ENCODE measurements at regions of chr16 and their contacts with region 1.

Region 1: GRCh38 chr16:69796351-69797118 is 34.4 kb downstream of the WWP2 start:
- DNase-seq: peak; percentile 21 to 43 (median 39)
- H3K4me3 ChIP-seq: no peak overlapping the region
- H3K4me3 Mint-ChIP-seq: no peak overlapping the region
- H3K27ac ChIP-seq: no peak overlapping the region
- H3K27ac Mint-ChIP-seq: no peak overlapping the region
- H3K4me1 ChIP-seq: no peaks in the 10 kb centered on the region
- H3K4me1 Mint-ChIP-seq: peaks cover 7 to 16% (median 8%) of the 10 kb centered on the region in 4 donors
- H3K27me3 ChIP-seq: no peaks in the 10 kb centered on the region
- H3K27me3 Mint-ChIP-seq: no peaks in the 10 kb centered on the region

Region 2: GRCh38 chr16:69709456-69710084 is 87.0 kb before region 1 on chr16:
- CTCF ChIA-PET with region 1: interaction called, 4 read pairs
- POLR2A ChIA-PET with region 1: no interaction called
- intact Hi-C with region 1: loop called (anchors 1 kb)
- DNase-seq: peak in 4 of 5 donors; percentile 49 to 60 (median 58)
- H3K4me3 ChIP-seq: no peak overlapping the region
- H3K4me3 Mint-ChIP-seq: no peak overlapping the region
- H3K27ac ChIP-seq: no peak overlapping the region
- H3K27ac Mint-ChIP-seq: peak overlapping the region in 6 of 7 donors; percentile 0 to 70 (median 38)
- H3K4me1 ChIP-seq: peaks cover 6% of the 10 kb centered on the region
- H3K4me1 Mint-ChIP-seq: peaks cover 0 to 4% (median 2%) of the 10 kb centered on the region in 4 donors
- H3K27me3 ChIP-seq: no peaks in the 10 kb centered on the region
- H3K27me3 Mint-ChIP-seq: no peaks in the 10 kb centered on the region

Region 3: DNA sequence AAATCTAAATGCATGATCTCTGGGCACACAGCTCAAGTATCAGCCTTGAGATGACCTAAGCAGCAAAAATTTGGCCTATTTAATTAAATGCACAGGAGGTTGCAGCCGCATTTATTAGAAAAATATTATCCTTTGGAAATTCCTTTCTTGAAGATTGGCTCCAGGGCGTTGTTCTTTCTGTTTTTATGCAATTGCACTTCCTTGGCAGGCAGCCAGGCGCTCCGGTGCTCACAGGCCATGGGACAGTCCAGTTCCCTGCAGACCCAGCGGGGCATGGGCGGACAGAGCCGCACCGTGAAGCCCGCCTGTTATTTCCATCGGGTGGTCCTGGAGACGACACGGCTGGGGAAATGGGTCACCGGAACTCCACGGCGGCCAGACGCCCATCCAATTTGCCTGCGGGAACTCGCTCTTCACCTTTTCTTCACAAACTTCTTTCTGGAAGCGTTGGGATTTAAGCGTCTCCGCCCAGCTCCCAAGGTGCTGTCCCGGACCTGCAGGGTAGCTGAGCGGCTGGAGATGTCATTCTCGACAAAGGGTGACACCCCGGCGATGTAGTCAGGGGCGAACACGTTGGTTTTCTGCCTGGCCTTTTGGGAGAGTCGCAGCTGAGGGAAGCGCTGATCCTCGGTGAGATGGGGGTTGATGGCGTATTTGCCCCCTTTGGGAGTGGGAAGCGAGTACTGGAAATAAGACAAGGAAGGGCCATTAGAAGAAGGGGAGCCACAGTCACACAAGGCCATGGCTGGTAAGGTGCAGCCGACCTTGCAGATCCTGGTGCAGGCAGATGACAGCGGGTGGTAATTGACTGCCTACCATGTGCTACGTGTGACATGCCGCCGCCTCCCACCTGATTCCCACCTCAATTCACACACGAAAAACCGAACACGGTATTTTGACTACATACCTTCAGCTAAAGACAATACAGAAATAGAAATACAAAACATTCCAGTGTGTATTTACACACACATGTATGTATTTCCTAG is 54.3 kb before region 1 on chr16:
- CTCF ChIA-PET with region 1: no interaction called
- POLR2A ChIA-PET with region 1: no interaction called
- intact Hi-C with region 1: no loop called
- DNase-seq: no peak
- H3K4me3 ChIP-seq: no peak overlapping the region
- H3K4me3 Mint-ChIP-seq: no peak overlapping the region
- H3K27ac ChIP-seq: no peak overlapping the region
- H3K27ac Mint-ChIP-seq: peak overlapping the region in 1 of 7 donors; percentile 24
- H3K4me1 ChIP-seq: no peaks in the 10 kb centered on the region
- H3K4me1 Mint-ChIP-seq: peaks cover 0 to 2% (median under 1%) of the 10 kb centered on the region in 4 donors
- H3K27me3 ChIP-seq: no peaks in the 10 kb centered on the region
- H3K27me3 Mint-ChIP-seq: no peaks in the 10 kb centered on the region

Region 4: DNA sequence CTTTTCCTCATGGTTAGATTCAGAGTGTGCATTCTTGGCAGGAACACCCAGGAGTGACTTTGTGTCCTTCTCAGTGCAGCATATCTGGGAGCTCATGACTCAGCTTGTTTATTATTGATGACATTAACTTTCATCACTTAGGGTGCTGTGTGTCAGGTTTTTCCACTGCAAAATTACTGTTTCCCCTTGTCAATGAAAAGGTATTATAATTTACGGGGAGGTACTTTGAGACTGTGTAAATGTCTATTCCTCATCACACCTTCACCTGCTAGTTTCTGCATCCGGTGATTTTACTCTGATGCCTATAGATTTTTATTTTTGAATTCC is 16.1 kb after region 1 on chr16:
- CTCF ChIA-PET with region 1: interaction called, 17 read pairs
- POLR2A ChIA-PET with region 1: no interaction called
- intact Hi-C with region 1: no loop called
- DNase-seq: no peak
- H3K4me3 ChIP-seq: no peak overlapping the region
- H3K4me3 Mint-ChIP-seq: no peak overlapping the region
- H3K27ac ChIP-seq: no peak overlapping the region
- H3K27ac Mint-ChIP-seq: no peak overlapping the region
- H3K4me1 ChIP-seq: no peaks in the 10 kb centered on the region
- H3K4me1 Mint-ChIP-seq: peaks cover 0 to 4% (median 1%) of the 10 kb centered on the region in 4 donors
- H3K27me3 ChIP-seq: no peaks in the 10 kb centered on the region
- H3K27me3 Mint-ChIP-seq: no peaks in the 10 kb centered on the region